Calu3 (cell line): ENCODE measurements at regions of chr4 and their contacts with region 1.

Region 1: DNA sequence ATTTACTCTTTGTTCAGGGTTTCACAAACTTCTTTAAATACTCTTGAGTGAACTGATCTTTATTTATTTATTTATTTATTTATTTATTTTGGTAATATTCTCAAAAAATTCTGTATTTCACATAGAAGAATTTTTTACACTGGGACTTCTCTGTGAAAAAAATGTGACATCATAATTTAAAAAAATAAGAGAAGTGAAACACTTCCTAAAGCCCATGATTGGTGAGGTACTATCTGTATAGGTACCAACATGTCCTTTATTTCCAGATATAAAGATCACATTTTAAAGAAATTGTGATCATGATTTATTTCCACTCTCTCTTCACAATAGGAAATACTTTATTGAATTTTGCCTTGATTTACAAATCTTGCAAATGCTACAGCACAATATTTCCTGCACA is 497.1 kb downstream of the FAT4 start:
- DNase-seq: no peak
- H3K4me3 Mint-ChIP-seq: no peak overlapping the region
- H3K27ac Mint-ChIP-seq: no peak overlapping the region
- H3K4me1 Mint-ChIP-seq: no peaks in the 10 kb centered on the region
- H3K27me3 Mint-ChIP-seq: no peaks in the 10 kb centered on the region
- CTCF ChIP-seq: no peak

Region 2: GRCh38 chr4:125836597-125837195 is 24.8 kb after region 1 on chr4:
- CTCF ChIA-PET with region 1: no interaction called
- intact Hi-C with region 1: loop called (anchors 1 kb)
- DNase-seq: no peak
- H3K4me3 Mint-ChIP-seq: no peak overlapping the region
- H3K27ac Mint-ChIP-seq: no peak overlapping the region
- H3K4me1 Mint-ChIP-seq: no peaks in the 10 kb centered on the region
- H3K27me3 Mint-ChIP-seq: no peaks in the 10 kb centered on the region
- CTCF ChIP-seq: no peak

Region 3: GRCh38 chr4:126071346-126072333 is 259.7 kb after region 1 on chr4:
- CTCF ChIA-PET with region 1: no interaction called
- intact Hi-C with region 1: no loop called
- DNase-seq: no peak
- H3K4me3 Mint-ChIP-seq: no peak overlapping the region
- H3K27ac Mint-ChIP-seq: no peak overlapping the region
- H3K4me1 Mint-ChIP-seq: no peaks in the 10 kb centered on the region
- H3K27me3 Mint-ChIP-seq: no peaks in the 10 kb centered on the region
- CTCF ChIP-seq: no peak

Region 4: DNA sequence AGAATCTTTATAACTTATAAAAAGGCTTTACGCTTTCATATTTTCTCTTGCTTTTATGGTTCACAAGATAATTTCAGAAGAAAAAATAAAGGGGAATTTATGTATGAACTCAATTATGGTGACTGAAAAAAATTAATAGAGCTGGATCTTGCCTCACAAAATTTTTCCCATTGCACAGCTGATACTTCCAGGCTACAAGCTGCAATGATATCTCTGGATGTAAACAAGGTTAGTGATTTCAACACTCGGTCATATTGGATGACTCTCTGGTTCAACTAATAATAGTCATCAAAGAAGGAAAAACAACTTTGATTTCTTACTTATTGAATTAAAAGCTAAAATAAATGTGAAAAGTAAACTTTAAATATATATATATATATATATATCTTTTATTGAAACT is 370.9 kb after region 1 on chr4:
- CTCF ChIA-PET with region 1: no interaction called
- intact Hi-C with region 1: no loop called
- DNase-seq: no peak
- H3K4me3 Mint-ChIP-seq: no peak overlapping the region
- H3K27ac Mint-ChIP-seq: no peak overlapping the region
- H3K4me1 Mint-ChIP-seq: no peaks in the 10 kb centered on the region
- H3K27me3 Mint-ChIP-seq: no peaks in the 10 kb centered on the region
- CTCF ChIP-seq: no peak